Heart right ventricle (tissue), 16 donors: ENCODE measurements at regions of chr19 and their contacts with region 1.

Region 1: GRCh38 chr19:2532252-2533071 is 56.5 kb downstream of the GADD45B start:
- DNase-seq: no peak
- ATAC-seq: peak in 1 of 8 donors; percentile 6
- H3K4me3 ChIP-seq: no peak overlapping the region
- H3K27ac ChIP-seq: no peak overlapping the region
- H3K4me1 ChIP-seq: peaks cover 0 to 6% (median 0%) of the 10 kb centered on the region in 9 donors
- H3K27me3 ChIP-seq: no peaks in the 10 kb centered on the region
- CTCF ChIP-seq: no peak

Region 2: DNA sequence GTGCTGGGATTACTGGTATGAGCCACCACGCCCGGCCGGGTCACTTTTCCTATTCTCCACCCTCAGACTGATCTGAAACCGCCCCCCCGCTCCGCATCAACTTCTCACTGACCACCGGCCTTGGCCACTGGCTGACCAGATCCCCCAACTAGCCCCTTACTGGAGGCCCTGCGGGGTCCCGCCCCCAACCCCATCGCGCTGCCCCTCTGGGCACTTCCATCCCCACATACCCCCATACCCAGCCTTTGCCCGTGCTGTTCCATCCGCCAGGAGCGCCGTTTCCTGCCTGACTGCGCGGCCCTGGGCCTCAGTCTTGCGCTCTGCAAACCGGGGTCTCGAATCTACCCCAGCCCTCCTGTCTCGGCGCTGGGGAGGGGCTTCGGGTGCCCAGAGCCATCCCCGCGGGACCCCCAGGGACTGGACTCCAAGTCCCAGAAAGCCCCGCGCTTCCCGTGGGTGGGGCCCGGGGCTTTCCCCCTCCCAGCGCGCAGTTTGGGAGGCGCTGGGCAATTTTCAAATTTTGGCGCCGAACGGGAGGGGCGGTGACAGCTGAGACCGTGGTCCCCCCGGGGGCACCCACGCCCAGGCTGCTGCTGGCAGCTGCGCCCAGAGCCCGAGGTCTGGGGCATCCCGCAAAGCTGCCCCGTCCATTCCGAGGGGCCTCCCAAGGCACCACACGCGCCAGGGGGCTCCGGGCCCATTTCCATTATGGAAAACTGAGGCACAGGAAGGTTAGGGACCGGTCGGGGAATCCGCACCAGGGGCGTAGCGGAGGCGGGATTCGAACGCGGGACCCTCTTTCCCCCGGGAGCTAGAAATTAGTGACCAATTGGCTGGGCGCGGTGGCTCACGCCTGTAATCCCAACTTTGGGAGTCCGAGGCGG is 70.5 kb before region 1 on chr19:
- intact Hi-C with region 1: no loop called
- DNase-seq: peak; percentile 45 to 68
- ATAC-seq: peak; percentile 50 to 76 (median 64)
- H3K4me3 ChIP-seq: peak overlapping the region; percentile 5 to 68 (median 60)
- H3K27ac ChIP-seq: peak overlapping the region in 2 of 10 donors; percentile 36 to 66
- H3K4me1 ChIP-seq: peaks cover 5 to 28% (median 22%) of the 10 kb centered on the region in 9 donors
- H3K27me3 ChIP-seq: no peaks in the 10 kb centered on the region
- CTCF ChIP-seq: peak in 3 of 9 donors; percentile 8 to 20 (median 11)

Region 3: DNA sequence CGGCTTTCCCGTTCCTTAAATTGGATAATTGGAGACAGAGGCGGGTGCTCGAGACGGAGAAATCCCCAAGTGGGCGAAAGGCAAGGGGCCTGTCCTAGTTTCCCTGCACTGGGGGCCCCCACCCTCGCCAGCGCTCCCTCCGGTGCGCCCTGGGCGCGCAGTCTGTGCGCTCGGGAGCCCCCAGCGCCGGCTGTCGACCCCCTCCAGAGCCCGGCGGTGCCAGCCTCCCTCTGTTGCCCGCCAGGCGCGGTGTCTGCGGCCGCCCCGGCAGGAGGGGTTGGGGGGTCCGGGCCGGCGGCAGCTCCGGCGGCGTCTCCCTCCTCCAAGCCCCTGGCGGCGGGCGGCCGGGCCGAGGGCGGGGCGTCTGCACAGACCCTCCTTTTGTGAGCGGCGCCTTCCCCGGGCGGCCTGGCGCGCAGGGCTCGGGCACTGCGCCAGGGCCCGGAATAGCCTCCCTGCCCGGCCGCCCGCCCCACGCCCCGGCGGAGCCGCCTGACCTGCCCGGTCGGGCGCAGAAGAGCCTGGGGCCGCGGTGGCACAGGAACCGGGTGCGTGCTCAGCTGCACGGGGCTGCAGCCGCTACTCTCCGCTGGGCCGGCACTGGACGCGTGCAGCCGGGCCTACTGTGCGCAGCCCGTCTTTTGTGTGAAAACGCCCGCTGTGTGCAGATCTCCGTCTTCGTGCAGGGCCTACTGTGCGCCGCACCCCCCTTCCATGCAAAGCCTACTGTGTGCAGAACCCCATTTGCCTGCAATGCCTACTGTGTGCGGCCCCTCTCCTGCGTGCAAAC is 43.3 kb before region 1 on chr19:
- intact Hi-C with region 1: loop called in 1 of 10 experiments (anchors 10 kb)
- DNase-seq: peak; percentile 50 to 73
- ATAC-seq: peak; percentile 72 to 89 (median 80)
- H3K4me3 ChIP-seq: peak overlapping the region in 9 of 10 donors; percentile 40 to 68 (median 54)
- H3K27ac ChIP-seq: peak overlapping the region; percentile 53 to 81 (median 73)
- H3K4me1 ChIP-seq: peaks cover 5 to 40% (median 24%) of the 10 kb centered on the region in 9 donors
- H3K27me3 ChIP-seq: peaks cover 0 to 58% (median 0%) of the 10 kb centered on the region in 7 donors
- CTCF ChIP-seq: peak in 3 of 9 donors; percentile 17 to 29 (median 24)